AG04449 (cell line): ENCODE measurements at regions of chr9 and their contacts with region 1.

Region 1: GRCh38 chr9:5608298-5609225 is 20.3 kb upstream of the RIC1 start:
- DNase-seq: no peak
- H3K4me3 ChIP-seq: no peak overlapping the region
- CTCF ChIP-seq: no peak

Region 2: DNA sequence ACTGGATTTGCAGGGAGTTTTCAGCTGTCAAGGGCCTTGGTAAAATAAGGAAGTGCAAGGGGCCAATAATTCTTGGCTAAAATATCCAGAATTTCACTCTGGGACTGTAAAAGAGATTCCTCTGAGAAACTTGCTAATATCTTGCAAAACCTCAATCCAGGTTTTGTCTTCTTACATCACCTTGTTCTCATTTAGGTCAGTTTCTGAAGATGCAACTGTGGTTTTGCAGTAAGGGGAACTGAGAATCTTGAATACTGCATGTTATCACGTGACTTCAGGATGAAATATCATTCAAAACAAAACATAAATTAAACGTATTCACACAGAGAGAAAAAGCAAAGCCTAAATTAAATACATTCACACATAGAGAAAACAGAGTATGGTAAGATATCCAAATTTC is 14.7 kb before region 1 on chr9:
- CTCF ChIA-PET with region 1: interaction called, 43 read pairs
- POLR2A ChIA-PET with region 1: no interaction called
- DNase-seq: no peak
- H3K4me3 ChIP-seq: no peak overlapping the region
- CTCF ChIP-seq: no peak

Region 3: GRCh38 chr9:5708414-5708813 is 99.9 kb after region 1 on chr9:
- CTCF ChIA-PET with region 1: no interaction called
- POLR2A ChIA-PET with region 1: no interaction called
- DNase-seq: no peak
- H3K4me3 ChIP-seq: no peak overlapping the region
- CTCF ChIP-seq: no peak